Upper lobe of right lung (tissue), 1 donor: ENCODE measurements at regions of chr7 and their contacts with region 1.

Region 1: DNA sequence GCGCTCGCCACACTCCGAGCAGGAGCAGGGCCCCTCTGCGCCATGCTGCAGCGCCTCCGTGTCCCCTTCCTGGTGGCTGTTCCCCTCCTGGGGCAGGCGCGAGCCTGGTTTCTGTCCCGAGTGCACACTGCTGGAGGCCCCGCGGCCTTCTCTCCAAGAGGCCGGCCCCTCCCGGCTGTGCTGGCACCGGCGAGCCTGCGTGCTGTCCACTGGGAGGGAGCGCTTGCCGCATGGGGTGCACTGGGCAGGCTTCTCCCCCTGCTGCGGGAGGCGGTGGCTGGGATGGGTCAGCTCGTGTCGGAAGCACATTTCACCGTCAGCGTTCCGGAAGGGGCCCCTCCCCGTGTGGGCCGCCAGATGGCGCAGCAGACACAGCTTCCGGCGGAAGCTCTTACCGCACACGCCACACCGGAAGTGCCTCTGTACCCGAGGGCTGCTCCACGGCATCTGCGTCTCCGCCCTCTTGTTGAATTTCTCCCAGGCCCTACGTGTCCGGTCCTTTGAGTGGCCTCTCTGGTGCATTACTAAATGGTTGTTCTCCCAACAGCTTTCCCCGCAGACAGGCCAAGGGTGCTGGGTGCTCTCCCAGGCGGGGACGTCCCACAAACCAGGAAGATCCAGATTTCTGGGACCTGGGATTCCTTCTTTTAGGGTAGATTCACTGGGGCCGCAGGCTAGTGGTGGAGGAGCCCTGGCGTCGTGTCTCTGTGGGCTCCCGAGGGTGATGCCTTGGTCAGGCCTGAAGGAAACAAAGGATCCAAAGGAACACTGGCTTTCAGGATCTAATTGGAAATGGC is 18.7 kb downstream of the ZNF786 start:
- DNase-seq: no peak
- ATAC-seq: peak; percentile 73
- H3K4me3 ChIP-seq: no peak overlapping the region
- H3K27ac ChIP-seq: no peak overlapping the region
- H3K4me1 ChIP-seq: no peaks in the 10 kb centered on the region
- H3K27me3 ChIP-seq: no peaks in the 10 kb centered on the region
- CTCF ChIP-seq: peak; percentile 18

Region 2: DNA sequence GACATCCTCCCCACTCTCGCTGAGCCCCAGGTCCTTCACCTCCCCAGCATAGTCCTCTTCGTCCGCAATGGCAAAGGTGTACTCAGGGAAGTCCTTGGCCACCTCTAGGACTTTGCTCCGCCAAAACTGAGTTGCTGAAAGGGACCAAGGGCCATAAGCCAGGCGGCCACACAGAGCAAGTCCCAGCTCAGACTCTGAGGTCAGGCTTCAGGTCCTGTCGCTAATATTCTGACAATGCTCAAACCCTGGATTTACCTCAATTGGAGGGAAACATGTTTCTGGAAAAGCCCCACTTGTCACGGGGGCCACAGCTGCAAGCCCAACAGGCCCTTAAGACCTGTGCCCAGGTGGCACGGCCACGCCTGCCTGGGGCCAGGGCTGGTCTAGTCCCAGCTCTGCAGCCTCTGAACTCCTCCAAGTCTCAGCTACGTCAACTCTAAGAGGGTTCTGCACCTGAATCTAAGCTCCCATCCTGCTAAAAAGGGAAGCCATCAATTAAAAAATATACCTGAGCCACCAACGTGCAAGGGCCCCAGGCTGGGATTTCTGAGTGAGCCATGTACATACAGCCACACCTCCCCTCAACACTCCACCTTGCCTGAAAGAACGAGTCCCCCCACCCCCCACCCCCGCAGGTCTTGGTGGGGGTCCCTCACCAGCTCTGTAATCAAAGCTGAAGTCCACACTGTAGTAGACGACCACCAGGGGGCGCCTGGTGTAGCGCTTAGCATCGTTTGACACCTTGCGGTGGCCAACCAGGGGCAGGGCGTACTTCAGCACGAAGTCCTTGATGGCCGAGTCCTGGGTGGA is 66.4 kb before region 1 on chr7:
- intact Hi-C with region 1: loop called (anchors 10 kb)
- DNase-seq: peak; percentile 91
- ATAC-seq: peak; percentile 91
- H3K4me3 ChIP-seq: no peak overlapping the region
- H3K27ac ChIP-seq: no peak overlapping the region
- H3K4me1 ChIP-seq: no peaks in the 10 kb centered on the region
- H3K27me3 ChIP-seq: no peaks in the 10 kb centered on the region
- CTCF ChIP-seq: peak; percentile 85